Right cardiac atrium (tissue), 5 donors: ENCODE measurements at regions of chr19 and their contacts with region 1.

Region 1: GRCh38 chr19:49224856-49225255 is 67.3 kb downstream of the TRPM4 start:
- DNase-seq: peak in 1 of 3 donors; percentile 62
- ATAC-seq: peak; percentile 50 to 74
- H3K4me3 ChIP-seq: no peak overlapping the region
- H3K27ac ChIP-seq: no peak overlapping the region
- H3K4me1 ChIP-seq: no peaks in the 10 kb centered on the region
- H3K27me3 ChIP-seq: no peaks in the 10 kb centered on the region

Region 2: DNA sequence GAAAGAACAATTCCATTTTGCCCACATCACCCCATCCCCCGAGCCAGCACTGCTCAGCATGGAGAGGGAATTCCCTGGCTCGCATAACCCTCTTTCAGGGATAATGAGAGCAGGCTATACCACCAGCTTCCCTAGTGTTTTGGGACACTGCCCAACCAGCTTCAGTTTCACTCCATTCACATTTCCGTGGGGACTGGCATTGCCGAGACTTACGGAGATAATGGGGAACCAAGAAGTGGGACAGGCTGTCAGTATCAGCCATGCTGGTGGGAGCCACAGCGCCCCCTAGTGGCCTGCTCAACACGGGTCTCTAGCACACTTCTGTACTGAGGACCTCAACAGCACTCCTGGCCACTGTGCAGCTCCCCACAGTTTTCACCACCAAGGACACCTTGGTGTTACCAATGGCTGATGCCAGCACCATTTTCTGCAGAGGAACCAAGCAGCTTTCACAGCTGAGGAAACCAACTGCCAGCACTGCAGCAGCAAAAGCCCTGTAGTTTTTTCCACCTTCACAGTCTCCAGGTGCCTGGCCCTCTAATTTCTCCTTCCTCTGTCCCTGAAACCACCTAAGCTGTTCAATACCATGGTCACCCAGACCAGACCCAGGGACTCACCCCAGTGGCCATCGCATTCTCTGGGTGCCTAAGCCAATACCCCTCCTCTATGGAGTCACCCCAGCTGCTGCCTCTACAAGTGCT is 76.5 kb after region 1 on chr19:
- intact Hi-C with region 1: loop called in 1 of 4 experiments (anchors 5 kb)
- DNase-seq: peak; percentile 81 to 92 (median 91)
- ATAC-seq: peak; percentile 93 to 94
- H3K4me3 ChIP-seq: peak overlapping the region; percentile 25
- H3K27ac ChIP-seq: no peak overlapping the region
- H3K4me1 ChIP-seq: no peaks in the 10 kb centered on the region
- H3K27me3 ChIP-seq: no peaks in the 10 kb centered on the region

Region 3: GRCh38 chr19:49421039-49421877 is 196.4 kb after region 1 on chr19:
- intact Hi-C with region 1: loop called in 1 of 4 experiments (anchors 10 kb)
- DNase-seq: peak; percentile 80 to 93 (median 90)
- ATAC-seq: peak; percentile 70 to 87
- H3K4me3 ChIP-seq: peak overlapping the region; percentile 4
- H3K27ac ChIP-seq: no peak overlapping the region
- H3K4me1 ChIP-seq: no peaks in the 10 kb centered on the region
- H3K27me3 ChIP-seq: no peaks in the 10 kb centered on the region